T-cell (primary cell): ENCODE measurements at regions of chr5 and their contacts with region 1.

Region 1: DNA sequence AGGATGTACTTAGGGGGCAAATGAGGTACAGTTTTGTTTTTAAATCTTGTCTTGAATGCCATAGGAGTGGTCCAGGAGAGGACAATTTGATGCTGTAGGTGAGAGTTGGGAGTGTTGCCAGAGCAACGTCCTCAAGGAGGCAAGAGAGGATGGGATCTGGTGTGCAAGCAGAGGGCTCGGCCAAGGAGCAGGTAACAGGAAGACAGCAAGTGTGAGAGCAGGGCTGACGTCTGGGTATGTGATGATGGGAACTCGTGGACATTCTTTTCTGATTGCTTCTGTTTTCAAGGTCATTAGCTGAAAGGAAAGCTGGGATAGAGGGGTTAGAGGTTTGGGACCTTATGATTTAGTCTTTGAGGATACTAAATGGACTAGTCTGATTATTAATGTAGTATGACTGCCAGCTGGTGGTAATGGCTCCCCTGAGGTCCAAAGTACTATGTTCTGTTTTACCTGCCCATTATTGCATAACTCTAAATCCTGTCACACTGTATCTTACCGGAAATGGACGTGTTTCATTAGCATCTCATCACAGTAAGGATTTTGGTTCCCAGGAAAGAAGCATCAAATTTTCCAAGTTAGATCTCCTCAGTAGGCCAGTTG is 15.4 kb downstream of the GNPDA1 start:
- DNase-seq: no peak
- ATAC-seq: no peak
- H3K4me3 ChIP-seq: no peak overlapping the region
- H3K4me3 Mint-ChIP-seq: no peak overlapping the region
- H3K27ac ChIP-seq: no peak overlapping the region
- H3K27ac Mint-ChIP-seq: no peak overlapping the region
- H3K4me1 ChIP-seq: no peaks in the 10 kb centered on the region
- H3K4me1 Mint-ChIP-seq: peaks cover 4 to 9% (median 5%) of the 10 kb centered on the region in 3 donors
- H3K27me3 ChIP-seq: no peaks in the 10 kb centered on the region
- H3K27me3 Mint-ChIP-seq: no peaks in the 10 kb centered on the region

Region 2: DNA sequence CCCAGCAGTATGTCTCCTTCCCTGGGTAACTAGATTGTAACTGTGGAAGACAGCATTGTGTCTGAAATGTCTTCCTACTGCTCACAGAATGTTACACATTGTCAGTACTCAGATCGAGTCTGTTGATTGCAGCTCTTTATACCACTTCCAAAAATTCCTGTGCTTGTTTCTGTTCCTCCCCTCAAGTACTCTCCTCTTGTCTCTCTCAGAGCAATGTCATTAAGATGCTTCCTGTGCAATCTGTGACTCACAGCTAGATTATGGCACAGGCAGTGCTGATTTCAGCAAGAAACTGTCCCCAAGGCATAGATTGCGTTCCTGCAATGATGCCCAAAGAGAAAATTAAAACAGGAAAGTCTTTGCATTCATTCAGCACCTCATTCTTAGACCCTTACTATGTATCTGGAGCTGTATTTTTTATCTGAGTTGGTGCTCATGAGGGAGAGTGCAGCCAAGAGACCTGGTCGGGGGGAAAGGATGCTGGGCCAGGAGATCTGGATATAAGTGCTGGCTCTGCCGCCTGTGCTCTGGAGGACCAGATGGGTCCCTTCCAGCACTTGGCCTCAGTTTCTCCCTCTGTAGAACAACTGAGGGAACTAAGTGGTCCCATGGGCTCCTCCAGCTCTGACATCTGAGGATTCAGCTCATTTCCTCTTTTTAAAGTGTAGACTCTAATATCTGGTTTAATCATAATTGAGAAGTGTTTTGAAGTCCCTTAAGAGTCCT is 56.1 kb after region 1 on chr5:
- CTCF ChIA-PET with region 1: interaction called in 1 of 2 experiments, 13 read pairs
- POLR2A ChIA-PET with region 1: no interaction called
- DNase-seq: no peak
- ATAC-seq: no peak
- H3K4me3 ChIP-seq: no peak overlapping the region
- H3K4me3 Mint-ChIP-seq: no peak overlapping the region
- H3K27ac ChIP-seq: no peak overlapping the region
- H3K27ac Mint-ChIP-seq: peak overlapping the region in 1 of 2 donors; percentile 48
- H3K4me1 ChIP-seq: no peaks in the 10 kb centered on the region
- H3K4me1 Mint-ChIP-seq: peaks cover 7 to 11% (median 10%) of the 10 kb centered on the region in 3 donors
- H3K27me3 ChIP-seq: no peaks in the 10 kb centered on the region
- H3K27me3 Mint-ChIP-seq: no peaks in the 10 kb centered on the region